Transverse colon (tissue), 4 donors: ENCODE measurements at regions of chr1 and their contacts with region 1.

Region 1: GRCh38 chr1:70008660-70009059 is 196.7 kb downstream of the LRRC40 start:
- DNase-seq: no peak
- H3K4me3 ChIP-seq: no peak overlapping the region
- H3K27ac ChIP-seq: no peak overlapping the region
- H3K4me1 ChIP-seq: no peaks in the 10 kb centered on the region
- H3K27me3 ChIP-seq: no peaks in the 10 kb centered on the region
- CTCF ChIP-seq: no peak
- EP300 ChIP-seq: no peak
- POLR2A ChIP-seq: no peak

Region 2: GRCh38 chr1:70567167-70567566 is 558.5 kb after region 1 on chr1:
- in situ Hi-C with region 1: no loop called
- intact Hi-C with region 1: loop called (anchors 5 kb)
- DNase-seq: no peak
- H3K4me3 ChIP-seq: no peak overlapping the region
- H3K27ac ChIP-seq: no peak overlapping the region
- H3K4me1 ChIP-seq: no peaks in the 10 kb centered on the region
- H3K27me3 ChIP-seq: no peaks in the 10 kb centered on the region
- CTCF ChIP-seq: no peak
- EP300 ChIP-seq: no peak
- POLR2A ChIP-seq: no peak

Region 3: GRCh38 chr1:71343686-71344416 is 1335.2 kb after region 1 on chr1:
- in situ Hi-C with region 1: no loop called
- intact Hi-C with region 1: no loop called
- DNase-seq: no peak
- H3K4me3 ChIP-seq: no peak overlapping the region
- H3K27ac ChIP-seq: no peak overlapping the region
- H3K4me1 ChIP-seq: no peaks in the 10 kb centered on the region
- H3K27me3 ChIP-seq: no peaks in the 10 kb centered on the region
- CTCF ChIP-seq: no peak
- EP300 ChIP-seq: no peak
- POLR2A ChIP-seq: no peak